Endothelial cell of umbilical vein (primary cell): ENCODE measurements at regions of chr13 and their contacts with region 1.

Region 1: DNA sequence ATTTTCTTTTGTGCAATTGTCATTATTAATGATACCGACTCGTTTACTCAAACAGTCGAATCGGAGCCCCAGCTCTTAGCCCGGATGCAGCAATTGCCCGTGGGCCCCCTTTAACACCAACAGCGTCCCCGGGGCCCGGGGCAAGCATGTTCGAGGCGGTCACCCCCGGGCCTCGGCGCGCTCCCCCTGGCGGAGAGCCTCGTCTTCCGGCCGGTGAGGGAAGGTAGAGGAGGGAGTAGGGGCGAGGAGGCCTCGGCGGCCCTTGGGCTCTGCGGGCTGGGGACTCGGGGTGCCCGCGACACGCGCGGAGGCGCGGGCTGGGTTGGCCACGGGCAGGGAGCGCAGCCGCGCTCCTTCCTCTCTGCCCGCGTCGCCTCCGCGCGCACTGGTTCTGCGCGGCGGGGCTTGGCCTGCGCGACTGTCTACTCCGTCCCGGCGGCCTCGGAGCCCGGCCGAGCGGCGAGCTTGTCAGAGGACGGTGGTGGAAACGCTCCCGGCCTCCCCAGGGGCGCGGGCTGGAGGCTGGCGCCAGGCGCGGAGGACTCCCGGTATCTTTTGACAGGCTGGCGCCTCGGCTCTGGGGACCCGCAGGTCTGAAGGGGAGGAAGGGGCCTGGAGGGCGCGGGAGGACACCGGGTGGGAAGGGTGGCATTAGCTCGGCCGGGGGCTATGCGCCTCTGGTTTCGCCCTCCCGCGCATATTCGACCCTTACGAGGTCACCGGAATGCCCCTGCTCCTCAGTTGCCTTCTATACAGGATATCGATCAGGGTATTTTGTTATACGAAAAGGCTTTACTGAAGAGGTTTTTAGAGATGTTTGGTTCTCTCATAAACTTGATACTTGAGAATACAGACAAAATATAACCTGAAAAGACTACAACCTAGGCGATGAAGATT is 1.5 kb downstream of the BIVM start:
- DNase-seq: peak; percentile 79
- H3K4me3 ChIP-seq: peak overlapping the region; percentile 47 to 71 (median 56)
- H3K27ac ChIP-seq: peak overlapping the region; percentile 41
- H3K4me1 ChIP-seq: peaks cover 18% of the 10 kb centered on the region
- H3K27me3 ChIP-seq: no peaks in the 10 kb centered on the region
- CTCF ChIP-seq: peak; percentile 76 to 85
- POLR2A ChIP-seq: no peak

Region 2: GRCh38 chr13:102580552-102581169 is 219.7 kb before region 1 on chr13:
- CTCF ChIA-PET with region 1: interaction called, 10 read pairs
- POLR2A ChIA-PET with region 1: no interaction called
- dilution Hi-C with region 1: no loop called
- intact Hi-C with region 1: loop called (anchors 1 kb)
- DNase-seq: peak; percentile 74
- H3K4me3 ChIP-seq: no peak overlapping the region
- H3K27ac ChIP-seq: no peak overlapping the region
- H3K4me1 ChIP-seq: no peaks in the 10 kb centered on the region
- H3K27me3 ChIP-seq: peaks cover 20 to 22% of the 10 kb centered on the region in 2 experiments
- CTCF ChIP-seq: peak; percentile 49
- POLR2A ChIP-seq: no peak